ENCODE measurements at regions of chr10 and their contacts with region 1.

Region 1: GRCh38 chr10:101830322-101831168 is 12.3 kb upstream of the OGA start:
- DNase-seq: peak; percentile 96
- ATAC-seq: peak; percentile 77
- H3K4me3 Mint-ChIP-seq: peak overlapping the region; percentile 70
- H3K27ac Mint-ChIP-seq: peak overlapping the region; percentile 98
- H3K4me1 Mint-ChIP-seq: peaks cover 56% of the 10 kb centered on the region
- H3K27me3 Mint-ChIP-seq: no peaks in the 10 kb centered on the region

Region 2: GRCh38 chr10:101897633-101898032 is 67.1 kb after region 1 on chr10:
- CTCF ChIA-PET with region 1: no interaction called
- POLR2A ChIA-PET with region 1: no interaction called
- intact Hi-C with region 1: no loop called
- DNase-seq: no peak
- ATAC-seq: no peak
- H3K4me3 Mint-ChIP-seq: no peak overlapping the region
- H3K27ac Mint-ChIP-seq: no peak overlapping the region
- H3K4me1 Mint-ChIP-seq: peaks cover 14% of the 10 kb centered on the region
- H3K27me3 Mint-ChIP-seq: no peaks in the 10 kb centered on the region

Region 3: DNA sequence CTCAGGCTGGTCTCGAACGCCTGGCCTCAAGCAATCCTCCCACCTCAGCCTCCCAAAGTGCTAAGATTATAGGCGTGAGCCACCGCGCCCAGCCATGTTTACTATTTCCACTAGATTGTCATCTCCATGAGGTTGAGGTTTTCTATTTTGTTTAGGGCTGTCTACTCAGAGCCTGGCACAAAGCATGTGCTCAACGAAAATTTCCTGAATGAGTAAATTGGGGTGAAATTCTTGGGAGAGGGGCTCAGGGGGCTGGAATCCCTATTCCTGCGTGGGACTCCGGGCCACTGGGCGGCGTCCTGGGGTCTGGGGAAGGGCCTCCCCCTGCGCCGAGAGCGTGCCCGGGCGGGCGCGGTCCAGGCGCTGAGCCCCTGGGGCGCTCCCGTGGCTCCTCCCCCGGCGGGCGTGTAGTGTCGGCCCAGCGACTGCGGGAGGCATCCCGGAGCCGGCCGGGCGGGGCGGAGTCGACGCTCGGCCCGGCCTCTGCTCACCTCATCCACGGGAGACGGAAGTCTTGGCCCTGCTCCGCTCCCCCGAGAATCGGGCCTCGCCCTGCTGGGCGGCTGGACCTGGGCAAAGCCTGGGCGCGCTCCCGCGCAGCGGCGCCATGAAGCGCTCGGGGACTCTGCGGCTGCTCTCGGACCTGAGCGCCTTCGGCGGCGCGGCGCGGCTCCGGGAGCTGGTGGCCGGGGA is 234.5 kb after region 1 on chr10 and contains the start of gene HPS6:
- CTCF ChIA-PET with region 1: interaction called, 5 read pairs
- POLR2A ChIA-PET with region 1: no interaction called
- intact Hi-C with region 1: loop called in 1 of 2 experiments (anchors 2 kb)
- DNase-seq: peak; percentile 94
- ATAC-seq: peak; percentile 99
- H3K4me3 Mint-ChIP-seq: peak within 1 kb of the TSS; percentile 79
- H3K27ac Mint-ChIP-seq: peak within 1 kb of the TSS; percentile 88
- H3K4me1 Mint-ChIP-seq: peaks cover 22% of the 10 kb centered on the region
- H3K27me3 Mint-ChIP-seq: no peaks in the 10 kb centered on the region
- total RNA-seq, gene HPS6: 12.9 to 18.9 TPM

Region 4: GRCh38 chr10:102399217-102400089 is 568.9 kb after region 1 on chr10:
- CTCF ChIA-PET with region 1: interaction called, 3 read pairs
- POLR2A ChIA-PET with region 1: no interaction called
- intact Hi-C with region 1: loop called in 1 of 2 experiments (anchors 5 kb)
- DNase-seq: peak; percentile 94
- ATAC-seq: peak; percentile 60
- H3K4me3 Mint-ChIP-seq: peak overlapping the region; percentile 95
- H3K27ac Mint-ChIP-seq: peak overlapping the region; percentile 98
- H3K4me1 Mint-ChIP-seq: peaks cover 41% of the 10 kb centered on the region
- H3K27me3 Mint-ChIP-seq: no peaks in the 10 kb centered on the region

Region 5: DNA sequence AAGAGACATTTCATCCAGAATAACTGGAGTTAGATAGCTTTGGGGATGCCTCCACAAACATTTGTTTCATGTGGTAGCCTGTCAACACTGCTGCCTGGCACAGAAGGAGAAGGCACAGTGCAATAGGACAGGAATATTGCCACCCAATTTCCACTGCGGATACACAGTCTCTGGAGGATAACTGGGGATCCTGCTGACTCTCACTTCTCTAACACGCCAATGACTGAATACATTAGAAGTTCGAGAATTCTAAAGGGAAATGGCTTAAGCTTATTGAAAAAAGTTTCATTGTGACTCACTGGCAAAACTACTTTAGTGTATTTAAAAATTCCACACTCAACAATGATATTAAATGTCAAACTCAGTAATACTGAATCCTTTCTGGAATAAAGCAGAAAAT is 870.7 kb after region 1 on chr10:
- CTCF ChIA-PET with region 1: no interaction called
- POLR2A ChIA-PET with region 1: no interaction called
- intact Hi-C with region 1: no loop called
- DNase-seq: no peak
- ATAC-seq: no peak
- H3K4me3 Mint-ChIP-seq: no peak overlapping the region
- H3K27ac Mint-ChIP-seq: no peak overlapping the region
- H3K4me1 Mint-ChIP-seq: peaks cover 11% of the 10 kb centered on the region
- H3K27me3 Mint-ChIP-seq: no peaks in the 10 kb centered on the region

Measured in activated CD4-positive, alpha-beta T cell treated with anti-CD3 and anti-CD28 coated beads for 36 hours (primary cell).